ENCODE measurements at regions of chr7 and their contacts with region 1.

Region 1: DNA sequence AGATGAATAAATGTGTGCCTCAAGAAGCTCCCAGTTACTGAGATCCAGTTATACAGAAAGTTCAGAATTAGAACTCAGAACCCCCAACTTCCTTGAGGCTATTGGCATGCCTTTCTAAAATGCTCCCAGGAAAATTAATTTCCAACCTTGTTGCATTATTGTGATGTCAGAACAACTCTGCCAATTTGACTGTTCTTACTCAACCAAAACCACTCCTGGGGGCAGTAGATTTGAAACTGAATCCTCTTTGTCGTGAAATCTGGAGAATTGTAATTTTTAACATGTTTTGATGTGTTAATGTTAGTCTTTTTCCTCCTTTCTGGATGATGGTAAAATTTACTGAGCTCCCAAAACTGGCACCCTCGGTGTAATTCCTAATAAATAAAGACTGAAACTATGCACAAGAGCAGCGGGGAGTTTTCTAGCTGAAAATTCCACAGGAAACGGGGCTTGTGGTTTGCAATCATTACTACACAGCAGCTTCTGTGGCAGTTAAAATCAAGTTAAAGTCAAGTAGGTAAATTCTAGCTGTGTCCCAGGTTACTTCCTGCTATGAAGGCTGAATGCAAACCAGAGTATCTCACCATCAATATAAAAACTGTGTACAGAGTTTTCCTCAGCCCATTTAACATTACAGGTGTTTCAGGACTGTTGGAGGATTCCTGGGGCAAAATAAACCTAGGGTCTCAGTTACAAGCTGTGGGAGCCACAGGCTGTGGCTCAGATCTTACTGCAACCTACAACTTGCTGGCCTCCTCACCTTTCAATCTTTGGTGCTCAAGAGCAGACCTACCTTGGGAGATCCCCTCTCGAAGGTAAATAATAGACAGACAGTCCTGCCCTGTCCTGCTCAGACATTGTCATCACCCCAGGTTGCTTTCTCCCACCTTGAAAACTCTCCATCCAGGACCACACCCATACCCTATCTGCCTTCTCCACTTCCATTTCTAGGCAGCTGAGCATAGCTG is 156.3 kb upstream of the KMT2E start:
- DNase-seq: no peak
- ATAC-seq: no peak

Region 2: DNA sequence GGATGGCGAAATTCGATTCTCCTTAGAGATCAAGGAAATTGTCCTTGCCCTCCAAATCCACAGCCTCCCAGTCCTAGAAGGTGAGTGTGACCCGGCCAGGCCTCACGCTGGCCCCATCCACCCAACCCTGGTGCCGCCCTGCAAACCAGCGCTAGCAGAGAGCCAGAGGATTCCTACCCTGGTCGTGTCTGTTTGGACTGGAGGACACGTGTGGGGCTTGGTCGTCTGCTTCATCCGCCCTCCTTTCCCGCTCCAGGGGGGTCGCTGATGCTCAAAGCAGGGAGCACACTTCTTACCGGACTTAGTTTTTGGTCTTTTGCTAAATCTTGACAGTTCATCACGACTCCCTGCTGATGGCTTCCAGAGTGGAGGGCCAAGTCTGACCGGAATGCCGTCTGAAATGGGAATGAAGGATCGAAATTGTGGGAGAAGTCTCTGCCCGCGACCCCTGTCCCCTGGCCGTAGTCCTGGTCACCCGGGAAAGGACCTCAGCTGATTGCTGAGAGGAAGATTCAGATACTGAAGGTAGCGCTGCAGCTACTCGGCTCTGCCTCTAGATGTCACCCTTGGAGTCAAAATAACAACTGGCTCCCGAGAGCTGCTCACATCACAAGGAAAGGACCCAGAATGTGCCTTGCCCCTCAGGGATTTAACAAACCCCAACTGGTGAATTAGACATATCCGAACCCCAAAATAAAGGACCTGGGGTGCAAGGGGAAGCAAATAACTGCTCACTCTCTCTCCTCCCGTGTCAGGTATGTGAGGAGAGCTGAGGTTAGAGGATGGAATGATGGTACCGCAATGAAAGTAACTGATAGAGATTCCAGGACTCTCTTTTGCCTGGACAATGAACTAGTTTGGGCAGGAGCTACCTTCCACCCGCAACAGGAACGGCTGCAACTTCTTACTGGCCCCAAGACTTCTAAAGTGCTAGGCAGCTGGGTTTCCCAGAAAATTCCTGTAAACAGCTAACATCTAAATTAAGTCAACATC is 626.4 kb before region 1 on chr7:
- intact Hi-C with region 1: loop called (anchors 10 kb)
- DNase-seq: no peak
- ATAC-seq: peak; percentile 76

Region 3: DNA sequence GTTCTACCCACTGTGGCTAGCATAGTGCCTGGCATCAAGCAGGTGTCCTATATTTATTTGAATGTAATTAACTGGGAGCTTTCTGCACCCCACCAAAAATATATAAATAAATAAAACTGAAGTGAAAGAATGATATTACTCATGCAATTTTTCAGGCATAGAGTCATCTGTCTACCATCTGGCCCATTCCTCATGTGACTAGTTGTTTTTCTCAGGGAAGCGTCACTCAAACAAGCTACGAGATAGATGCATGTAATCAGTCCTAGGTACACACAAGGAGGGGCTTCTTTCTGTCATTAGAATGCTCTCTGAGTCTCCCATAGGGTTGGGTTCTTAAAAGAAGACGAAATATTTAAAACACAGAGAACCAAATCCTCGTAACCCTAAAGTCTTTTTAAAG is 99.2 kb before region 1 on chr7:
- intact Hi-C with region 1: no loop called
- DNase-seq: no peak
- ATAC-seq: no peak

Region 4: DNA sequence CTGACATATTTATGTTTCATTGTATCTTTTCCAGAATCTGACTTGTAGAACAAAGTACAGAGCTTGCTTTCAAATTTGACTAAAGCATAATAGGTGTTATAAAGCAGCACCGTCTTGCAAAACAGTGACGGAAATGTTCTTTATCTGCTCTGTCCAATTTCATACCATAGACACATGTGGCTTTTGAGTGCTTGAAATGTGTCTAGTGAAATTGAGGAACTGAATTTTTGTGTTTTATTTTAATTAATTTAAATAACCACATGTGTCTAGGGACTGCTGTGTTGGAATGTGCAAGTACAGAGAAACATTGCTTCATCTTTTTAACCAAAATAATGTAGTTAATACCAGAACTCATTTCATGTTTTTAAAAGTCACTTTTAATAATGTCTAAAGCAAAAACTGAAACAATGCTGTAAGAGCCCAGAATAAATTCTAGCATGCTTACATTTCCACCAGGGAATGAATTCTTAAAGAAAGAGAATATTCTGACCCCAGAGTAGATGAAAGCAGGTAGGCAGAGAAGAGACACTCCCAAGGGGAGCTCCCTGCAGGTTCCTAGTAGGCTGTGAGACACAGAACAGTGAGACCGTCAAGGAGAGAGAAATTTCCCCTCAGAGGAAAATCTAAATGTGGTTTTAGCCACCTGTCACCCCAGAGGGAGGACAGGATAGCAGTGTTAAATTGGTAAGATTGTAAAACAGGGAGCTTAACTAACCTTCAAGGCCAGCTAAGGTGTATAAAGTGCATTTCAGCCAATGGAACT is 19.0 kb before region 1 on chr7:
- intact Hi-C with region 1: no loop called
- DNase-seq: no peak
- ATAC-seq: no peak

Region 5: DNA sequence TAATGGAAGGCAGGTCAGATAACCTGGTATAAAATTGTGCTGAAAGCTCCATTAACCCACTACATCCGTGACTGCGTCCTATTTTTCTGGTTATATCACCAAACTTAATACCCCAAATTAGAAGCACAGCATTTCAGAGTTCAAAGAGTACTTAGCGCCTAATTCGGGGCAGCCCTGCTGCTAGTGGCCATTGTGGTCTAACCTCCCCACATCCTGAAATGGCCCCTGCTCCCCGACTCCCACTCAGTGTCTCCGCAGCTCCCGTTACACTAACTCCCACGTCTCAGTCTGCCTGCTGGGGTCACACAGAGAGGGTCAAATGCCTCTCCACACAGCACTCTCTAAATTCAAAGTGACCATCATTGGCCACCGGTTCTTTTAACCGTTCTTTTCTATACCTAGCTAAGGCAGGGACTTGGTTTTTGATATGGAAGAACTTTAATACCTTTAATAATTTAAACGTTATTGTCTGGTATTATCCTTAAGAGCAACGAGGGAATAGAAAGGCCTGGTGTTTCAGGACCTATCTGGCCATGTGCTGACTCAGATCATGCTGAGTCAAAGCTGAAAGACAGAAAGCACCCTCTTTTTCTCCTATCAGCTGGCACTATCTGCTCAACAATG is 273.4 kb after region 1 on chr7:
- intact Hi-C with region 1: no loop called
- DNase-seq: no peak
- ATAC-seq: no peak